CD14-positive monocyte (primary cell): ENCODE measurements at regions of chr2 and their contacts with region 1.

Region 1: GRCh38 chr2:172555522-172556283 is at the start of gene PDK1:
- DNase-seq: peak; percentile 76 to 84 (median 83)
- H3K4me3 ChIP-seq: peak within 1 kb of the TSS; percentile 70 to 81 (median 77)
- H3K4me3 Mint-ChIP-seq: peak within 1 kb of the TSS; percentile 89 to 96
- H3K27ac ChIP-seq: peak within 1 kb of the TSS; percentile 65 to 84
- H3K27ac Mint-ChIP-seq: peak within 1 kb of the TSS; percentile 90 to 97 (median 94)
- H3K4me1 ChIP-seq: peaks cover 19 to 23% of the 10 kb centered on the region in 2 donors
- H3K4me1 Mint-ChIP-seq: peaks cover 29% of the 10 kb centered on the region
- H3K27me3 ChIP-seq: peaks cover 0 to 8% of the 10 kb centered on the region in 2 donors
- H3K27me3 Mint-ChIP-seq: peaks cover 4 to 9% (median 6%) of the 10 kb centered on the region in 3 donors
- CTCF ChIP-seq: no peak
- polyA plus RNA-seq, gene PDK1: 5.4 to 10.3 (median 9.7) TPM

Region 2: DNA sequence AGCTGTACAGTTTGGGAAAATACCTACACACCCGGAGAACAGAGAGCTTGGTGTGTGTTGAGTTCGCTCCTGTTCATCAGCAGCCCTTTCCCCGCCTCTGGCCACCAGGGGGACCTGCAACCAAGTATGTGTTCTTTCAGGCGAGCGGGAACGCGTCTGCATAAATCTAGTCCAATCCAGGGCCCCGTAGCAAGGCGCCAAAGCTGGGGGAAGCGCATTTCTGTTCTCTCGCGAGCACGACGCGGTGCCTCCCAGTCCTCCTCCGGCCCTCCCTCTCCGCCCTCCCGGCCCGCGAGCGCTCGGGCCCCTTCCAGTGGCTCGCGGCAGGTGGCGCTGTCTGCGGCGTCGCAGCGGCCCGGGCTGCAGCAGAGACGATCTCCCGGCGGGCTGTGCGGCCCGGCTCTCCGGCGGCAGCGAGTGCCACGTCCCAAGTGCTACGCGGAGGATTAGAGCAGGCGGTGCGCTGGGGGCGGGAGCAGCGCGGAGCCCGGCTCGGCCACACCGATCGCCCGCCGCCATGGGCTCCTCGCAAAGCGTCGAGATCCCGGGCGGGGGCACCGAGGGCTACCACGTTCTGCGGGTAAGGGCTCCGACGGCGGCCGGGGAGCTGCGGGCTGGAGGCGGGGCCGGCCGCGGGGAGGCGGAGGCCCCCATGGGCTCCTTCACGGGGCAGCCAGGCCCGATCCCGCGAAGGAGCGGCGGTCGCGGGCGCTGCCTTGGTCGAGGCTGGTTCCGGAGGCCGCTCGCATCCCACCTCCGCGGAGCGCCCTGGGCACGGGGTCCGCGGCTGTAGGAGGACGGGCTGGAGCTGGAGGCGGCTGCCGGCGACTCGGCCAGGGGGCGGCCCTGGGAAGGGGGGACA is 1626.6 kb before region 1 on chr2 and contains the start of gene GORASP2:
- intact Hi-C with region 1: loop called in 1 of 2 experiments (anchors 10 kb)
- DNase-seq: peak; percentile 97 to 99 (median 98)
- H3K4me3 ChIP-seq: peak within 1 kb of the TSS; percentile 72 to 94 (median 92)
- H3K4me3 Mint-ChIP-seq: peak within 1 kb of the TSS; percentile 88 to 94
- H3K27ac ChIP-seq: peak within 1 kb of the TSS; percentile 55 to 88
- H3K27ac Mint-ChIP-seq: peak within 1 kb of the TSS; percentile 76 to 92 (median 87)
- H3K4me1 ChIP-seq: peaks cover 22 to 30% of the 10 kb centered on the region in 2 donors
- H3K4me1 Mint-ChIP-seq: peaks cover 37% of the 10 kb centered on the region
- H3K27me3 ChIP-seq: no peaks in the 10 kb centered on the region
- H3K27me3 Mint-ChIP-seq: peaks cover 0 to 3% (median 2%) of the 10 kb centered on the region in 3 donors
- CTCF ChIP-seq: peak; percentile 99
- polyA plus RNA-seq, gene GORASP2: 34.5 to 51.2 (median 46.5) TPM

Region 3: DNA sequence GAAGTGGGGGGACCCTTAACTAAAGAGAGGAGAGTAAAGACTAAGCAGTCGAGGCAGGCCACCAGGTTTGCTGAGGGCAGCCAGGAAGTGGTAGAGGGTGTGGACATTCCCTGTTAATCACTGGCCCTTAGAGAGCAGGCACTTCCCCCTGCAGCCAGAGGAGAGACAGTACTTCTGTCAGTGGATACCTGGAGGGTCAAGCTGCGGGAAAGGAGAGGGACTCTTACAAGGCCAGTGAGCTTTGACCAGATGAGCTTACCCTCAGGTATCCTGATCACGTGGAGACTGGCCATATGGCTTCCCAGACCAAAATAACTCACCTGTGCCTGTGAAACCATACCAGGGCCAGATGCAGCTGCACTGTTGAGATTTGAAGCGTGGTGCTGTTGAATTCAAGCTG is 99.7 kb before region 1 on chr2:
- intact Hi-C with region 1: no loop called
- DNase-seq: peak in 2 of 3 donors; percentile 25 to 45
- H3K4me3 ChIP-seq: no peak overlapping the region
- H3K4me3 Mint-ChIP-seq: no peak overlapping the region
- H3K27ac ChIP-seq: no peak overlapping the region
- H3K27ac Mint-ChIP-seq: no peak overlapping the region
- H3K4me1 ChIP-seq: peaks cover 19 to 38% of the 10 kb centered on the region in 2 donors
- H3K4me1 Mint-ChIP-seq: peaks cover 46% of the 10 kb centered on the region
- H3K27me3 ChIP-seq: peaks cover 0 to 3% of the 10 kb centered on the region in 2 donors
- H3K27me3 Mint-ChIP-seq: peaks cover 3 to 9% (median 8%) of the 10 kb centered on the region in 3 donors
- CTCF ChIP-seq: no peak

Region 4: DNA sequence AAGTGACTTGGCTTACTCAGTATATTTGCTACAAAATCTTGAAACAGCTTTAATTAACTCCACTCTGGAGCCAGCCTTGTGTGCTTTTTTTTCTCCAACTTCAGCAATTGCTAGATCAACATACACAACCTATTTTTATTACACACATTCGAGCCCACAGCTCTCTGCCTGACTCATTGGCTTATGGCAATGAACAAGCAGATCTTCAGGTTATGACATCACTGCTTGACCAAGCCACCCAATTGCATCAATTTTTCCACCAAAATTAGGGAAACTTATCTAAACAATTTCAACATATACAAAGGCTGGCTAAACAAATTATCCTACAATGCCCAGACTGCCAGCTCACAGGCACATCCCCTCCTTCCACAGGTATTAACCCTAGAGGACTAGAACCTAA is 39.4 kb before region 1 on chr2:
- intact Hi-C with region 1: no loop called
- DNase-seq: peak in 2 of 3 donors; percentile 60 to 80
- H3K4me3 ChIP-seq: no peak overlapping the region
- H3K4me3 Mint-ChIP-seq: no peak overlapping the region
- H3K27ac ChIP-seq: peak overlapping the region in 1 of 2 donors; percentile 60
- H3K27ac Mint-ChIP-seq: peak overlapping the region in 6 of 7 donors; percentile 54 to 88 (median 78)
- H3K4me1 ChIP-seq: peaks cover 13 to 31% of the 10 kb centered on the region in 2 donors
- H3K4me1 Mint-ChIP-seq: peaks cover 27% of the 10 kb centered on the region
- H3K27me3 ChIP-seq: no peaks in the 10 kb centered on the region
- H3K27me3 Mint-ChIP-seq: peaks cover 0 to 2% (median 0%) of the 10 kb centered on the region in 3 donors
- CTCF ChIP-seq: no peak